Left lung (tissue), 14 donors: ENCODE measurements at regions of chr6 and their contacts with region 1.

Region 1: DNA sequence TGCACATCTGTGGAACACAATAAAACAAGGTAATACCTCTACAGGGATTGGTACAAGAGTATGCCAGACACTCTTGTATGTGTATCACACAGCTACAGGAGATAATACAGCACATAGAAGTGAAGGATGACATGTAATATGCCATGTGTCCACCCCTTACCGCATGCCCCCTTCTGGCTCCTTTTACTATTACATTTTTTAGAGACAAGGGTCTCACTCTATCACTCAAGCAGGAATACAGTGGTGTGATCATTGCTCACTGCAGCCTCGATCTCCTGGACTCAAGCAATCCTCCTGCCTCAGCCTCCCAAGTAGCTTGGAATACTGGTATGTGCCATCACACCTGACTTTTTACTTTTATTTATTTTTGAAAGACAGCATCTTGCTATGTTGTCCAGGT is 4.2 kb upstream of the NCR3 start:
- DNase-seq: no peak
- ATAC-seq: peak; percentile 63
- H3K4me3 ChIP-seq: no peak overlapping the region
- H3K27ac ChIP-seq: no peak overlapping the region
- H3K4me1 ChIP-seq: peaks cover 0 to 25% of the 10 kb centered on the region in 2 donors
- H3K27me3 ChIP-seq: no peaks in the 10 kb centered on the region
- CTCF ChIP-seq: peak; percentile 18 to 37

Region 2: DNA sequence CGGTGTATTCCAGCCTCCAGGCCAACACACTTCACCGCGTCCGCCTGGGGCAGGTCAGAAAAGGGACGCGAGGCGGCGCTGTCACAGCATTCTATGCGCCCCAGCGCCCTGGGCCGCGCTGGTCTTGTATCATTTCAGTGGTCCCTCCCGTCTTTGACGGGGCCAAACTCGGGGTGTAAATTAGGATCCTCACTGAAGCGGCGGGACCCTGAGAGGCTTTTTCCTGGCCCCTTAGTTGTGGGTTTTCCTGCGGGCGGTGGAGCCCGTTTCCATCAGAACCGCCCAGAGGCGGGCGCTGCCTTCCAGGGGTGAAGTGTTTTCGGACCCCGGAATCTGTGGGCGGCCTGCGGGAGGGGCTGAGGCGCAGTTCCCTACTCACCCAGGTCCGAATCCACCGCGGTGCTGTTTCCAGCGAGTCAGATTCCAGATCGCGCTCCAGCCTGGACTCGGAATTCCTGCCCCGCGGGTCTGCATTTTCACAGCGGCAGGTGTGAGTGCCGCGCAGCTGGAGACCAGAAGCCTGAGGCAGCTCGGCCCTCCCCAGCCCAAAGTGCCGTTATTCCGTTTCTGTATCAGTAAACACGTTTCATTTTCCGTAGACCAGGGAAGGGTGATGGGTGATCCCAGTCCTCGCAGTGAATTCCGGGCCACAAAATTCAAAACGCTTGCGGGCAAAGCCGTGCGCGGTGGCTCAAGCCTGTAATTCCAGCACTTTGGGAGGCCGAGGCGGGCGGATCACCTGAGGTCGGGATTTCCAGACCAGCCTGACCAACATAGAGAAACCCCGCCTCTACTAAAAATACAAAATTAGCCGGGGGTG is 102.9 kb before region 1 on chr6:
- intact Hi-C with region 1: loop called in 1 of 2 experiments (anchors 10 kb)
- DNase-seq: peak in 3 of 4 donors; percentile 67 to 97 (median 88)
- ATAC-seq: peak; percentile 82
- H3K4me3 ChIP-seq: peak overlapping the region; percentile 53 to 81
- H3K27ac ChIP-seq: peak overlapping the region; percentile 78 to 90
- H3K4me1 ChIP-seq: peaks cover 0 to 58% of the 10 kb centered on the region in 2 donors
- H3K27me3 ChIP-seq: no peaks in the 10 kb centered on the region
- CTCF ChIP-seq: peak; percentile 82 to 94

Region 3: GRCh38 chr6:31541658-31542521 is 55.1 kb before region 1 on chr6 and contains the start of gene DDX39B:
- intact Hi-C with region 1: loop called (anchors 2 to 10 kb)
- DNase-seq: peak; percentile 97 to 98 (median 98)
- ATAC-seq: peak; percentile 90
- H3K4me3 ChIP-seq: peak within 1 kb of the TSS; percentile 66 to 83
- H3K27ac ChIP-seq: peak within 1 kb of the TSS; percentile 95 to 96
- H3K4me1 ChIP-seq: peaks cover 20 to 55% of the 10 kb centered on the region in 2 donors
- H3K27me3 ChIP-seq: no peaks in the 10 kb centered on the region
- CTCF ChIP-seq: no peak
- polyA plus RNA-seq, gene DDX39B: 595 to 685 (median 609) TPM

Region 4: GRCh38 chr6:31546962-31547726 is 49.9 kb before region 1 on chr6 and contains the start of gene NFKBIL1:
- intact Hi-C with region 1: loop called (anchors 2 to 10 kb)
- DNase-seq: peak; percentile 94 to 98 (median 95)
- ATAC-seq: peak; percentile 96
- H3K4me3 ChIP-seq: peak within 1 kb of the TSS; percentile 41 to 48
- H3K27ac ChIP-seq: peak within 1 kb of the TSS; percentile 82 to 84
- H3K4me1 ChIP-seq: peaks cover 13 to 54% of the 10 kb centered on the region in 2 donors
- H3K27me3 ChIP-seq: no peaks in the 10 kb centered on the region
- CTCF ChIP-seq: no peak
- polyA plus RNA-seq, gene NFKBIL1: 18.5 to 25.4 (median 19.0) TPM

Region 5: DNA sequence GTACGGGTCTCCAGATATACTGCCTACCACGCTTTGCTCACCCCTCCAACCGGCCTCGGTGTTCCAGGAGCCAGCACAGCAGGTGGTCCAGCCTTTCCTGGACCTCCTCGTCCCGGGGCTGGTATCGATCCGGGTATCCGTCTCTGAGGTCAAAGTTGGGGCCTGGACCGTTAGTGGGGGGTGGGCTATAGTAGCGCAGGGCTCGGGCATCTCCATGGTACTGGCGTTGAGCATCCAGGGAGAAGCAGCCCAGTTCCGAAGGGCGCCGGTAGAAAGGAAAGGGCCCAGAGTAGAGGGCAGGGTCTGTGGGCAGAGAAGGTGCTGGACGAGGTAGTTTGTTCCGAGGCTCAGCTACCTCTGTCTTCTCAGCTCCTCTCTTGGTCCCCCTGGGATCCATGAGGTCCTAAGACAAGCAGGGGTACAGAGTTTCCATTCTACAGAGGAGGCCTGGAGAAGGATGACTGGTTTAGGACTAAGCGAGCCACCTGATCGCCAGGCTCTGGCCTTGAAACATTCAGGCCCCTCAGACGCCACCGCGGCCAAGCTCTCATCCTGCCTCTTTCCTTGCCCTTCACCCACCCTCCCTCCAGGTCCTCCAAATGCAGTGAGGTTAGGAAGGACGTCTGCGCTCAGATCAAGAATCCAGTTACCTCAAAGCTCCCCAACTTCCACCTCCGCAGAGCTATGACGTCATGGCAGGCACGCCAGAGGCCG is 374.4 kb after region 1 on chr6:
- intact Hi-C with region 1: no loop called
- DNase-seq: peak in 1 of 4 donors; percentile 65
- ATAC-seq: no peak
- H3K4me3 ChIP-seq: peak overlapping the region; percentile 80 to 85
- H3K27ac ChIP-seq: peak overlapping the region; percentile 95 to 98
- H3K4me1 ChIP-seq: peaks cover 21 to 38% of the 10 kb centered on the region in 2 donors
- H3K27me3 ChIP-seq: no peaks in the 10 kb centered on the region
- CTCF ChIP-seq: no peak